ENCODE measurements at regions of chr7 and their contacts with region 1.

Region 1: DNA sequence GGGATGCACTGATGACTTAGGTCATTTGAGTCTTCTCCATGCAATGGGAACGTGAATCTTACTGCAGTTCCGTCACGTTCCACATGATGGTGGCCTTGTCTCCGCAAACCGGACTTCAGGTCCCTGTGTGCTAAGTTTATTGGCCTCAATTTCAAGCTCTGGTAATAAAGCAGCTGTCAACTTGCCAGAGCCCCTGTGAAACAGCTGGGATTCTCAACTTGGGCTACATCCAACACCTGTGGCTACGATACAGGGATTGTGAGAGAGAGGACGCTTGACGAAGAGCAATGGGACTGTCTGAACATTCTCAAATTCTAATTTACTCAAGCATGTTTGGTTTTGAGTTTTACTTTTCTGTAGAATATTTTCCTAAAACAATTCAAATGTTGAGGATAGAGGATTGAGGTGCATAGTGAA is 174.2 kb downstream of the PTN start:
- DNase-seq: peak; percentile 83
- H3K4me3 ChIP-seq: no peak overlapping the region
- H3K27ac ChIP-seq: no peak overlapping the region
- H3K4me1 ChIP-seq: peaks cover 0 to 4% of the 10 kb centered on the region in 2 experiments; a peak in 2 of 4 replicates
- H3K27me3 ChIP-seq: no peaks in the 10 kb centered on the region
- CTCF ChIP-seq: peak; percentile 92
- EP300 ChIP-seq: peak in 1 of 2 experiments; percentile 69; a peak in 2 of 4 replicates
- RAD21 ChIP-seq: peak; percentile 100

Region 2: GRCh38 chr7:137337902-137338301 is 168.6 kb after region 1 on chr7:
- CTCF ChIA-PET with region 1: interaction called, 13 read pairs
- POLR2A ChIA-PET with region 1: no interaction called
- DNase-seq: no peak
- H3K4me3 ChIP-seq: no peak overlapping the region
- H3K27ac ChIP-seq: no peak overlapping the region
- H3K4me1 ChIP-seq: peaks cover 0 to 2% of the 10 kb centered on the region in 2 experiments; a peak in 2 of 4 replicates
- H3K27me3 ChIP-seq: no peaks in the 10 kb centered on the region
- CTCF ChIP-seq: 0 out of 2 replicates have a peak, but pooled peaks have one; percentile 15
- EP300 ChIP-seq: no peak
- RAD21 ChIP-seq: peak; percentile 23

Region 3: DNA sequence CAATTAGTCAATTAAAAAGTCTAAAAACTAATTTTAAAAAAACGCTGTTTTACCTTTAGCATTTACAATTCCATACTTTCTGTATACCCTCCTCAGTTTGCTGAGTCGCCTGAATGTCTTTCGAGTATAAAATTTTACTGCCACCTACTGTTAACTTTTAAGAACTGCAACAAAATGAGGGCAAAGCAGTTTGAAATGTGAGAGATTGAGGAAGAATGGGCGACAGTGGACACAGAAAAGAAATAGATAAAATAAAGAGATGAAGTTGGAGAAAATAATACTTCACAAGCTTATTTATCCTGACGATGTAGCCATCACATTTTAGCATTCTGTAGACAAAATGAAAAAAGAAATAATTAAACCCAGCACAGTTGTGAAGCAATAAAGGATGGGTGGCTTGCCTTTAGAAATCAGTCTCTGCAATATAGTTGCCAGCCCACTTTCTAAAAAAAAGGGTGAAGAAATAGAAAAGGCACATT is 285.0 kb after region 1 on chr7:
- CTCF ChIA-PET with region 1: interaction called, 149 read pairs
- POLR2A ChIA-PET with region 1: no interaction called
- DNase-seq: peak; percentile 57
- H3K4me3 ChIP-seq: no peak overlapping the region
- H3K27ac ChIP-seq: no peak overlapping the region
- H3K4me1 ChIP-seq: no peaks in the 10 kb centered on the region; a peak in 1 of 4 replicates
- H3K27me3 ChIP-seq: no peaks in the 10 kb centered on the region
- CTCF ChIP-seq: peak; percentile 96
- EP300 ChIP-seq: no peak
- RAD21 ChIP-seq: peak; percentile 94

Region 4: DNA sequence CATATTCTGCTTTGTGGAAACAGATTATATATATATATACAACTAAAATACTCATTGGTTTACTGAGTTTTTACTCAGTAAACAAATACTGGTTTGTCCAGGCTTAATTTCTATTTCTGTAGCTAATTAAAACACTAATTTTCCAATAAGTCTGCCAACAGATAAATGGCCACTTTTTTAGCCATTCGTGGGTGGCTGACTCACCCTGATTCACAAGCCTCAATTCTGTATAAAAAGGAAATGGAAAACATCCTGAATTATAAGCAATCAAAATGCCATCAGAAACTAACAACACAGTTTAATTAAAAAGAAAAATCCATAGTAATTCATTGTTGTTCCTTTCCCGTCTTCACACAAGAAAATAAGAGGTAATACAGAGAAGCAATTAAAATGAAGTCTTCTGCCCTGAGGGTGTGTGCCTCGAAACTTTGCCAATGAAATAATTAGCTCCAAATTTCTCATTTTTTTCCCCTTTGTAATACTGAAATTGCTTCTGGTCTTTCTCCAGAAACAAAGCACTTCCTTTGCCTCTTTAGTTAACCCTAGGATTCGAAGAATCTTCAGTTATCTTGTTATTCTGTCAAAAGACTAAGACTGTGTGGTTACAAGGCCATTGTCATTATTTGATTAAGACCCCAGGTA is 292.9 kb after region 1 on chr7:
- CTCF ChIA-PET with region 1: interaction called, 21 read pairs
- POLR2A ChIA-PET with region 1: no interaction called
- DNase-seq: no peak
- H3K4me3 ChIP-seq: no peak overlapping the region
- H3K27ac ChIP-seq: peak overlapping the region in 1 of 2 experiments; percentile 60; a peak in 2 of 4 replicates
- H3K4me1 ChIP-seq: peaks cover 3 to 6% of the 10 kb centered on the region in 2 experiments; a peak in 2 of 4 replicates
- H3K27me3 ChIP-seq: no peaks in the 10 kb centered on the region
- CTCF ChIP-seq: no peak
- EP300 ChIP-seq: peak in 1 of 2 experiments; percentile 31; a peak in 1 of 4 replicates
- RAD21 ChIP-seq: no peak